Kidney (tissue), 22 donors: ENCODE measurements at regions of chr15 and their contacts with region 1.

Region 1: GRCh38 chr15:66946578-66947164 is 118.7 kb upstream of the SMAD3 start:
- DNase-seq: peak in 4 of 5 donors; percentile 71 to 85 (median 74)
- H3K4me3 ChIP-seq: peak overlapping the region in 1 of 3 donors; percentile 28
- H3K27ac ChIP-seq: no peak overlapping the region
- H3K4me1 ChIP-seq: no peaks in the 10 kb centered on the region
- H3K27me3 ChIP-seq: no peaks in the 10 kb centered on the region
- CTCF ChIP-seq: peak; percentile 96

Region 2: GRCh38 chr15:67303490-67304363 is 357.1 kb after region 1 on chr15:
- intact Hi-C with region 1: loop called (anchors 10 kb)
- DNase-seq: peak in 2 of 5 donors; percentile 53 to 60
- H3K4me3 ChIP-seq: no peak overlapping the region
- H3K27ac ChIP-seq: no peak overlapping the region
- H3K4me1 ChIP-seq: no peaks in the 10 kb centered on the region
- H3K27me3 ChIP-seq: no peaks in the 10 kb centered on the region
- CTCF ChIP-seq: peak; percentile 38

Region 3: DNA sequence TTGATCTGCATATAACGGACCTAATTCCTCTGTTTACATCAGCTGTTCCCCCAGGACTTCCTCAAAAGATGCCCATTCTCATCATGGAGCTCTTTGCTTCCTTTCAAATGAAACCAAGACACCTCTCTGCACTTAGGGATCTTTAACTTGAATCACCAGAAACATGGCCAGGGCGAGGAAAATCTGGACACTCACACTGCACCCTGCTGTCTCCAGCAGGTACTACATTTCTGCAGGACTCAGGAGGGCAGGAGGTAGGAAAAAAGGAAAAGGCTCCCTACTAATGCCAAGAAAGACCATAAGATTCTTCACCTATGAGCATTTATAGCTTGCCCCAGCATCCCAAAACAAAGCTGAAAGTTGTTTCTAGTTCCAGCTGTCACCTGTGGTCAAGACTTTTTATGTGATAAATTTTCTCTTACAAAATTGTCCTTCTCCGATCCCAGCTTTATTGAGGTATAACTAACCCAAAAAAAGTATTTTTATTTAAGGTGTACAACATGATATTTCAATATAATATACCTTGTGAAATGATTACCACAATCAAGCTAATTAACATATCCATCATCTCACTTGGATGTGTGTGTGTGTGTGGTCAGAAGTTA is 486.9 kb after region 1 on chr15:
- intact Hi-C with region 1: loop called (anchors 5 kb)
- DNase-seq: peak in 4 of 5 donors; percentile 45 to 68 (median 52)
- H3K4me3 ChIP-seq: no peak overlapping the region
- H3K27ac ChIP-seq: no peak overlapping the region
- H3K4me1 ChIP-seq: no peaks in the 10 kb centered on the region
- H3K27me3 ChIP-seq: no peaks in the 10 kb centered on the region
- CTCF ChIP-seq: peak; percentile 69